Activated T-helper 1 cell treated with anti-CD3 and anti-CD28 coated beads, Interleukin-12 subunit alpha, Interleukin-12 subunit beta, Interleukin-2, Interleukin-4 antibody, amounts not matched to agents 30 ng/mL and 10 ng/mL and 1 ng/mL, durations not matched to agents 14 hours and 24 hours and 36 hours (primary cell): ENCODE measurements at regions of chr2 and their contacts with region 1.

Region 1: GRCh38 chr2:74529357-74530238 is at the starts of genes AUP1 and HTRA2:
- DNase-seq: peak; percentile 90
- H3K4me3 Mint-ChIP-seq: peak within 1 kb of the TSS; percentile 99
- H3K27ac Mint-ChIP-seq: peak within 1 kb of the TSS; percentile 95
- H3K4me1 Mint-ChIP-seq: peaks cover 49% of the 10 kb centered on the region
- H3K27me3 Mint-ChIP-seq: no peaks in the 10 kb centered on the region
- total RNA-seq, gene AUP1: 178 and 187 TPM in 2 replicates
- total RNA-seq, gene HTRA2: 57.0 and 57.3 TPM in 2 replicates

Region 2: DNA sequence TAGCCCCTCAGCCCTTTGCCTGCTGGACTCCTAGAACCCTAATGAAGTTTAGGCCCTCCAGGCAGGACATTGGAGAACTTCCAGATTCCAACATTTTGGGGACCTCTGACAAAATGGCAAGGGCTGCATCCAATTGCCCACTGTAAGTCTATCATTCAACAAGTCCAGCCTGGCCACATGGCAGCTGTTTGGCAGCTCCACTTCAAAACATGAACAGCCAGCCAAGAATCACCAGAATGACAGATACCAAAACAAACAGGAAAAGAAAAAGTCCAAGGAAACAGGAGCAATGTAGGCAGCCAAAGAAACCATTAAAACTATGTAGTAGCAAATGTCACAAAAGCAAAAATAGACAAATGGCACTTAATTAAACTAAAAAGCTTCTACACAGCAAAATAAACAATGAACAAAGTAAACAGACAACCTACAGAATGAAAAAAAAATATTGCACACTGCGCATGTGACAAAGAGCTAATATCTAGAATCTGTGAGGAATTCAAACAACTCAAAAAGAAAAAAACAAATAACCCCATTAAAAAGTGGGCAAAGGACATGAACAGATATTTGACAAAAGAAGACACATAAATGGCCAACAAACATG is 211.8 kb before region 1 on chr2:
- intact Hi-C with region 1: no loop called
- DNase-seq: no peak
- H3K4me3 Mint-ChIP-seq: no peak overlapping the region
- H3K27ac Mint-ChIP-seq: no peak overlapping the region
- H3K4me1 Mint-ChIP-seq: no peaks in the 10 kb centered on the region
- H3K27me3 Mint-ChIP-seq: peaks cover 4% of the 10 kb centered on the region

Region 3: GRCh38 chr2:74334931-74335333 is 194.7 kb before region 1 on chr2:
- intact Hi-C with region 1: loop called (anchors 2 kb)
- DNase-seq: peak; percentile 57
- H3K4me3 Mint-ChIP-seq: no peak overlapping the region
- H3K27ac Mint-ChIP-seq: no peak overlapping the region
- H3K4me1 Mint-ChIP-seq: no peaks in the 10 kb centered on the region
- H3K27me3 Mint-ChIP-seq: peaks cover 2% of the 10 kb centered on the region

Region 4: DNA sequence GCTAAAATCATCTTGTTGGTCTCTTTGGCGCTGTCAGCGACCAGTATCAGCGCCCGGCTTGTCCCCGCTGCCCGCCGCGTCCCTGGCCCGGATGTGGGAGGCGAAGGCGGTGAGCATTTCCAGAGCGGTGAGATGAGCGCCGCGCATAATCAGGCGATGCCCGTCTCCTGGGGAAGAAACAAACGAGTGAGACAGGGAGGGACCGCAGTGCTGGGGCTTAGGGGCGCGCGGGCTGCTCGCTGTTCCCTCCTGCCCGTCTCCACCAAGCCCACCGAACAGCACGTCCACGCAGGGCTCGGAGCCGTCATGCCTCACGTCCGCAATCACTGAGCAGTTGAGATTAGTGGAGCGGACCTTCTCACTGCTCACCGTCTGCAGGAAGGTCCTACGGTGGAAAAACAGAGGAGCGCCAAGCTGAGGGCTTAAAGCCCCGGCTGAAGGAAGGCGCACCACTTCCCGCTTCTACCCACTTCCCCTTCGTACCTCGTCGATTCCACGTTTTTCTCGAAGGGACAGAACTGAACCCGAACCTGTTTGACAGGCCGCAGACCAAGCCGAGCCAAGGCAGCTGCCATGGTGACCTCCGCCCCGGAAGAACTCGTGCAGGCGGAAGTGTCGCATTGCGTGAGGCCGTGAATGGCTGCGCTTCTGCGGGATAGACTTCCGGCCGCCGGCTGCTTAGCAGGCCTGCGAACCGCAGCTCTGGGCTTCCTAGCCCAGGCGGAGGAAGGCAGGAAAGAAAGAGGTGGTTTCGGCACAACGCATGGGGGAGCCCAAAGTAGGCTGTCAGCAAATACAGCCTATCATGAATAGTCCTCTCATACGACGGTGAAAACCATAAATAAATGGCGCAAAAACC is 57.3 kb before region 1 on chr2 and contains the start of gene MRPL53:
- intact Hi-C with region 1: loop called (anchors 1 kb)
- DNase-seq: peak; percentile 95
- H3K4me3 Mint-ChIP-seq: peak within 1 kb of the TSS; percentile 99
- H3K27ac Mint-ChIP-seq: peak within 1 kb of the TSS; percentile 94
- H3K4me1 Mint-ChIP-seq: peaks cover 21% of the 10 kb centered on the region
- H3K27me3 Mint-ChIP-seq: peaks cover 2% of the 10 kb centered on the region
- total RNA-seq, gene MRPL53: 118 and 124 TPM in 2 replicates

Region 5: DNA sequence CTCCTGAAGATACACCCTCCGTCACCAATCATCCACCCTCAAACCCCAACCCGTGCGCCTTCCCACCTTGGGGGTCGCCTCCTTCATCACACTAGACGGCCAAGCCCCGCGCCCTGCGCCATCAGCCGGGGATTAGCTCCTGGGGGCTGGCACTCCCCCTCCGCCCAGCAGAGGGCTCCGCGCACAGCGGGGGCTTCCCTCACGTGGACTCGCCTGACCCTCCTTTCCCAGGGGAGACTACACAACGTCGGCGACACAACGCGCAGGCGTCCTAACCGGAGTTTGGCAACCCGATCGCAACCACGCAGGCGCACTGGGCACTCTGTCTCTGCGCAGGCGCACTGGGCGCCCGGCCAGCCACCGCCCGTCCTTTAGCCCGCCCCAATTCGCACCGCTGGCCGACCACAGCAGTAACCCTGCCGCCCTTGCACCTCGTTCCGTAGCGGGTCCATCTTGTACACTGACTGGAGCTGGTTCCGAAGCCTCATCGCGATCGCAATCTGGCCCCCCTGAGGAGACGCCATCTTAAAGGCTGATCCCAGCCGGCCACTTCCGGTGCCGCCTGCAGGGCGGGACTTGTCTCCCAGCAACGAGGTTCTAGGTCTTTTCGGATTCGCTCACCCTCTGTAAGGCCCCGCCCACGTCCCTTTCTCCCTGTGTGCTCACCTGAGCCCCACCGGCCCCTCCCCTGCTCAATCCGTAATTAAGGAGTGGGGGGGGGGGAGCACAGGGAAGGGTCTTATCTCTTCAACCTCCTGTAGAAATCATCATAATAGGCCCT is 22.3 kb before region 1 on chr2 and contains the start of gene PCGF1:
- intact Hi-C with region 1: loop called (anchors 1 kb)
- DNase-seq: peak; percentile 96
- H3K4me3 Mint-ChIP-seq: peak within 1 kb of the TSS; percentile 96
- H3K27ac Mint-ChIP-seq: peak within 1 kb of the TSS; percentile 99
- H3K4me1 Mint-ChIP-seq: peaks cover 55% of the 10 kb centered on the region
- H3K27me3 Mint-ChIP-seq: peaks cover 24% of the 10 kb centered on the region
- total RNA-seq, gene PCGF1: 41.9 and 45.0 TPM in 2 replicates

Region 6: GRCh38 chr2:74573747-74574562 is 44.4 kb after region 1 on chr2:
- intact Hi-C with region 1: loop called (anchors 1 kb)
- DNase-seq: peak; percentile 31
- H3K4me3 Mint-ChIP-seq: peak overlapping the region; percentile 20
- H3K27ac Mint-ChIP-seq: peak overlapping the region; percentile 27
- H3K4me1 Mint-ChIP-seq: peaks cover 53% of the 10 kb centered on the region
- H3K27me3 Mint-ChIP-seq: no peaks in the 10 kb centered on the region